ENCODE measurements at regions of chr22 and their contacts with region 1.

Region 1: DNA sequence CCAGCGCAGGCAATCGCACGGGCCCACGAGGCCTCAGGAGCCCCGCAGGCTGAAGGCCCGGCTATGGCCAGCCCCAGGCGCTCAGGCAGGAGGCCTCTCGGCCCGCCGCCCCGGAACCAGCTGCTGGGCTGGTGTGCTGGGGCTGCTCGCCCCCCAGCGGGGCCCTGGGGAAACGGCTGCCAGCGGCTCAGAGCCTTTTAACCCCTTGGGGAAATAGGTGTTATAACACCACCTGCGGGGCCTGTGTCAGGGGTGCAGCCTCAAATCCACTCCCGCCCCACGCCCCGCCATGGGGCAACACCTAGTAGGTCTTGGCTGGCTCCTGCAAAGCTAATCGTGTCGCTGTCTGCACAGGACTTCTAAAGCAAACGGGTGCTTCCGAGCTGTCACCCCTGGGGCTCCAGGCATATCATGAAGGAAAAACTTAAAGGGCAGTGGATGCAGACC is 237.4 kb downstream of the TTC28 start:
- DNase-seq: peak; percentile 91
- ATAC-seq: peak; percentile 93

Region 2: GRCh38 chr22:28051787-28052356 is 390.4 kb before region 1 on chr22:
- intact Hi-C with region 1: loop called (anchors 10 kb)
- DNase-seq: peak; percentile 84
- ATAC-seq: peak; percentile 69

Measured in left ventricle myocardium superior (tissue), 1 donor.